ENCODE measurements at regions of chr1 and their contacts with region 1.

Region 1: GRCh38 chr1:56831871-56832693 is 12.9 kb upstream of the FYB2 start:
- H3K4me3 ChIP-seq: no peak overlapping the region
- H3K27ac ChIP-seq: no peak overlapping the region
- H3K4me1 ChIP-seq: no peaks in the 10 kb centered on the region
- CTCF ChIP-seq: peak; percentile 56

Region 2: GRCh38 chr1:56821140-56821797 is 10.8 kb before region 1 on chr1:
- CTCF ChIA-PET with region 1: interaction called, 10 read pairs
- POLR2A ChIA-PET with region 1: no interaction called
- H3K4me3 ChIP-seq: no peak overlapping the region
- H3K27ac ChIP-seq: no peak overlapping the region
- H3K4me1 ChIP-seq: no peaks in the 10 kb centered on the region
- CTCF ChIP-seq: peak; percentile 61; the same call in 1 of the 2 replicates

Region 3: DNA sequence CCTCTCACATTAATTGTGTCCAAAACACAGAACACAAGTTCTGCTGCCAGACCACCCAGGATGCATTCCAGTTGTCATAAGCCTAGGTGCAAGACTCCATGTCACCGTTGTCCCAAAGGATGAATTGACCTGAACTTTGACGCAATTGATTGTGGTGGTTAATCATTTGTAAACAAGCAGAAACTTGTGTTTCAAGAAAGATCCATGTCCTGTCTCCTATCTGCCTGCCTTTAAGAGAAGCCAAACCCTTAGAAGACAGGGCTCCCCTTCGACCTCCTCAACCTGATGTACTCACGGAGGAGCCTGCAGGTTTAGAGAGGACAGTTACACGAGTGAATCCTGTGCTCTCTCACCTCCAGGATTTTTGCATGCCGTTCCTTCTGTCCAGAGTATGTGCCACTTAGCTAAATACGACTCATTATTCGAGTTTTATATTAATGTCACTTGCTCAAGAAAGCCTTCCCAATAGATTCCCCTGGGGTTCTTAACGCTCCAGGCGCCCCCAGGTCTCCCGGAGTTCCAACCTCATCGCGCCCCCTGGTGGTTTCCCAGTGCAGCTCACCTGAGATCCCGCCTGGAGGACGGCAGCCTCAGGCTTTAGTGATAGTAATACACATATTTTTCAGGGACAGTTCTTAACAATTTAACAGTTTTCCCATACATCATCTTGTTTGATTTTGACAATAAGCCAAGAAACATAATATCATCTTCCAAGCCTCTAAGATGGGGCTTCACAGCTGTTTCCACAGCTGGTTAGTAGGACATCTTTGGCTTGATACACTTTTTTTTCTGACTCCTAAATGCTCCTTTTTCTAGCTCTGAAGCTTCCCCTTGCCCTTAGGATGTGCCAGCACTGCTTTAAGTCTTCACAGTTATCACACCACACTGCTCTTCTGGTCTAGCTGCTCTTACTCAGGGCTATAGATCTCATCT is 136.1 kb after region 1 on chr1:
- CTCF ChIA-PET with region 1: interaction called, 12 read pairs
- POLR2A ChIA-PET with region 1: no interaction called
- H3K4me3 ChIP-seq: no peak overlapping the region
- H3K27ac ChIP-seq: no peak overlapping the region
- H3K4me1 ChIP-seq: no peaks in the 10 kb centered on the region
- CTCF ChIP-seq: peak; percentile 20; the same call in 1 of the 2 replicates

Region 4: DNA sequence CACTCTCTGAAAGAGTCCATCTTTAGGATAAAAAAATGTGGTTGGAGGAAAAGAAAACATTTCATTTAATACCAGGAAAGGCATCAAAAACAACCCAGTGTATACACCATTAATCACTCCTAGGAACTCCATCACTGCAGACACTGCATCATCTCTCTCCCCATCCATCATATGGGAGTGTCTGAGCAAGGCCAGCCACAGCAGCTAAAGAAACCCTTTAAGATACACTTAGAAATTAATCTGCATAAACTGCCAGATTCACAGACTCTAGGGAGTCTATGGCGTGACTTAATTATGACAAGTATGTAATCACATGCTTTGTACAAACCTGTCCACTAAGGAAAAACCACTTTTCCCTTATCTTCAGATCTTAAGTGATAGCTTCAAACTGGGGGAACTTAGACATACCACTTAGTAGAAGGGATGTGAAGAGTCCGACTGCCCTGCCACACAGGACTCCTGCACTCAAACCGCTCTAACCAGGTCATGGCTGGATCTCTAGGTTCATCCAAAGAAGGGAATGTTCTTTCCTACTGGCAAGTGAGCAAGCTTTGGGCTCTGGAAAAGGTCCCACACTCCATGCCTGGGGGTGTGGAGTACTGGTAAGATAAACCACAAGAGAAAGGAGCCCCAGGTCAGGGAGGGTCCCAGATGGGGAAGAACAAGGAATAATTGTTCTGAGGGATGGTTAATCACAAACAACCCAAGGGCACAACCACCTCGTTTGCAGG is 194.7 kb after region 1 on chr1:
- CTCF ChIA-PET with region 1: no interaction called
- POLR2A ChIA-PET with region 1: no interaction called
- H3K4me3 ChIP-seq: no peak overlapping the region
- H3K27ac ChIP-seq: no peak overlapping the region
- H3K4me1 ChIP-seq: no peaks in the 10 kb centered on the region
- CTCF ChIP-seq: no peak

Region 5: DNA sequence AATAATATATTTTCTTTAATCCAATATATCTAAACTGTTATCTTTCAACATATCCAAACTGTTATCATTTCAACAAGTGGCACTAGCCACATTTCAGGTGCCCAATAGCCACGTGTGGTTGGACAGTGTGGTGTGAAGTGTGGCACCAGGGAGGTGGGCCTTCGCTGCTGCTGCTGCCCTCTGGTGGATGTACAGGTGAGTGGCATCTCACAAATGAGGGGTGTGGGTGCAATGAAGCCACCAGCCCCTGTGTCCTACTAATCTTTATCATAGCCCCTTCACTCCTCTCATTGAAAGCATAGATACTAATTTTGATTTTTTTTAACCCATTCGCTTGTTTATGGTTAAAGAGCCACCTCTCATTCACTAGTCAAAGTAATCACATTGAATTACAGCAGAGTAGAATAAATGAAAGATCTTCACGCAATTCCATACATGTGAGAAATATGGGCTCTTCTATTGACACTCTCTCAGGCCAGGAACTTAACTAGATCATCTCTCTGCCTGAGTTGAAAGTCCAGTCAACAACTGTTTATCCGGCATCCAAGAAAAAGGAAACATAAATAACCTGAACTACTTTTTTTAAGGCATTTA is 1215.3 kb after region 1 on chr1:
- CTCF ChIA-PET with region 1: interaction called, 6 read pairs
- POLR2A ChIA-PET with region 1: interaction called, 10 read pairs
- H3K4me3 ChIP-seq: no peak overlapping the region
- H3K27ac ChIP-seq: no peak overlapping the region
- H3K4me1 ChIP-seq: no peaks in the 10 kb centered on the region
- CTCF ChIP-seq: peak; percentile 42